ENCODE measurements at regions of chr1 and their contacts with region 1.

Region 1: DNA sequence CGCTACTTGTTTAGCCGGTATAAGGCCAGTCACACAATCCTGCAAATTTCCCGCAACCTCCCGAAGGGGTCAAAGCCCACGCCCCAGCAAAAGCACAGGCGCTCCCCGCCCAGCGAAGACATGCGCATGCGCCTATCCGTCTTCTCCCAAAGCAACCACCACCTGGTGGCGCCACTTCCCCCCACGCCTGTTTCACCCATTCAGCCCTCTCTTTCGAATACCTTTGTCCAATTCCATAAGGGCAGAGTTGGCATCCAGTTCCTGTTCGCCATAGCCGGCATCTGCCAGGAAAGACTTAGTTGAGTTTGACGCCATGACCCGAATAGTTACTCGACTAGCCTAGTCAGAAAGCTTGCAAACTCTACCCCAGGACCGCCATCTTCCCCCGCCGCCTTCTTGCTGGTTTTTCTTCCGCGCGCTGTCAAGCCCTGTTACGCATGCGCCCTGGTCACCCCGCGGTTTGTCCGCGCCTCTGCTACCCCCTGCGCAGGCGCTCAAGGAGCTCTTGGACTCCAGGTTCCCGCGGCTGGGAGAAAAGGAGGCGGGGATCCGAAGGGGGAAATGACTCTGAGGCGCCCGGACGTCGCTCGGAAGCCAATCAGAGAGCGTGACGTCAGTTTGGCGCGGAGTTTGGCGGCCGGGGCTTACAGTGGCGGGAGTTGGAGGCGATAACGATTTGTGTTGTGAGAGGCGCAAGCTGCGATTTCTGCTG is at the starts of genes DTL and INTS7:
- DNase-seq: peak; percentile 98 to 100 (median 100)
- ATAC-seq: peak; percentile 86
- H3K4me3 ChIP-seq: peak within 1 kb of the TSS; percentile 74
- H3K27ac ChIP-seq: peak within 1 kb of the TSS; percentile 96
- H3K4me1 ChIP-seq: peaks cover 4 to 34% of the 10 kb centered on the region in 2 experiments; a peak in 4 of 5 replicates
- H3K27me3 ChIP-seq: no peaks in the 10 kb centered on the region
- CTCF ChIP-seq: peak; percentile 64 to 100 (median 80); a peak in 5 of 6 replicates
- EP300 ChIP-seq: no peak
- POLR2A ChIP-seq: peak; percentile 99
- RAD21 ChIP-seq: no peak; a peak in 1 of 4 replicates
- polyA plus RNA-seq, gene DTL: 38.3 to 66.7 TPM
- polyA plus RNA-seq, gene INTS7: 36.5 to 57.0 TPM

Region 2: GRCh38 chr1:211680752-211681327 is 354.4 kb before region 1 on chr1:
- CTCF ChIA-PET with region 1: interaction called, 22 read pairs
- POLR2A ChIA-PET with region 1: interaction called, 18 read pairs
- in situ Hi-C with region 1: loop called (anchors 25 kb)
- intact Hi-C with region 1: loop called (anchors 1 kb)
- DNase-seq: peak; percentile 78 to 92 (median 84)
- ATAC-seq: peak; percentile 82
- H3K4me3 ChIP-seq: no peak overlapping the region
- H3K27ac ChIP-seq: no peak overlapping the region
- H3K4me1 ChIP-seq: peaks cover 4 to 12% of the 10 kb centered on the region in 2 experiments; a peak in 4 of 5 replicates
- H3K27me3 ChIP-seq: peaks cover 7 to 27% of the 10 kb centered on the region in 2 experiments; a peak in 2 of 5 replicates
- CTCF ChIP-seq: peak; percentile 92 to 97 (median 97)
- EP300 ChIP-seq: 0 out of 2 replicates have a peak, but pooled peaks have one; percentile 15
- POLR2A ChIP-seq: no peak
- RAD21 ChIP-seq: peak; percentile 95 to 97

Region 3: GRCh38 chr1:211741116-211741515 is 294.2 kb before region 1 on chr1:
- CTCF ChIA-PET with region 1: no interaction called
- POLR2A ChIA-PET with region 1: no interaction called
- in situ Hi-C with region 1: no loop called
- intact Hi-C with region 1: loop called (anchors 1 kb)
- DNase-seq: peak in 1 of 4 experiments; percentile 43
- ATAC-seq: peak; percentile 59
- H3K4me3 ChIP-seq: no peak overlapping the region
- H3K27ac ChIP-seq: no peak overlapping the region
- H3K4me1 ChIP-seq: peaks cover 7% of the 10 kb centered on the region in 2 experiments; a peak in 3 of 5 replicates
- H3K27me3 ChIP-seq: no peaks in the 10 kb centered on the region
- CTCF ChIP-seq: peak; percentile 26 to 49 (median 44); a peak in 4 of 6 replicates
- EP300 ChIP-seq: no peak
- POLR2A ChIP-seq: no peak
- RAD21 ChIP-seq: peak in 1 of 2 experiments; percentile 64; a peak in 2 of 4 replicates

Region 4: DNA sequence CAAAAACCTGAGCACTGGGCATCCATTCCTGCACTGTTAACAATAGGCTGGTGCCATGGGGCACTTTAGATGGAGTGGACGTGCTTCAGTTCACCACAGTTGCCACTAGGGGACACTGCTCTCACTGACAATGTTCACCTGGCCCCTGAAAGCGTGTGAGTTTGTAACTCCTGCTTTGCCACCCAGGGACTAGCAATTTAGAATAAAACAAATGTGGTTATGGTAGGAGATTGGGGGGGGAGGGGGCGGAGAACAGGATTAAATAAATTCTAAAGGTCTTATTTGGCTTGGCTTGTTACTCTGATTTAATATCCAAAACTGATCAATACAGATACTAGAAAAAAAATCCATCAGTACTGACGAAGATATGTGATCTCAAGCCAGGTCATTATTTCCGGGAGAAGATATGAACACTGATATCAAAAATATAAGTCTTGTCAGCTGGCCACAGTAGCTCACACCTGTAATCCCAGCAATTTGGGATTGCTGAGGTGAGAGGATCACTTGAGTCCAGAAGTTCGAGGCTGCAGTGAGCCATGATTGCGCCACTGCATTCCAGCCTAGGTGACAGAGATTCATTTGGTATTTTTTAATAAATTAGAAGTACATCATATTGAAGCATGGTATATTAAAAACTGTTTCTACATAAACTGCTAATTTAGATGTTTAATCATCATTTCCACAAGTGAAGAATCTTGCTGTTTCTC is 23.1 kb before region 1 on chr1:
- CTCF ChIA-PET with region 1: interaction called, 12 read pairs
- POLR2A ChIA-PET with region 1: interaction called, 8 read pairs
- in situ Hi-C with region 1: no loop called
- intact Hi-C with region 1: loop called (anchors 1 kb)
- DNase-seq: peak; percentile 77 to 82 (median 78)
- ATAC-seq: peak; percentile 97
- H3K4me3 ChIP-seq: no peak overlapping the region
- H3K27ac ChIP-seq: no peak overlapping the region
- H3K4me1 ChIP-seq: no peaks in the 10 kb centered on the region
- H3K27me3 ChIP-seq: no peaks in the 10 kb centered on the region
- CTCF ChIP-seq: peak; percentile 92 to 98 (median 95)
- EP300 ChIP-seq: 0 out of 2 replicates have a peak, but pooled peaks have one; percentile 16
- POLR2A ChIP-seq: no peak
- RAD21 ChIP-seq: peak; percentile 89 to 95

Region 5: DNA sequence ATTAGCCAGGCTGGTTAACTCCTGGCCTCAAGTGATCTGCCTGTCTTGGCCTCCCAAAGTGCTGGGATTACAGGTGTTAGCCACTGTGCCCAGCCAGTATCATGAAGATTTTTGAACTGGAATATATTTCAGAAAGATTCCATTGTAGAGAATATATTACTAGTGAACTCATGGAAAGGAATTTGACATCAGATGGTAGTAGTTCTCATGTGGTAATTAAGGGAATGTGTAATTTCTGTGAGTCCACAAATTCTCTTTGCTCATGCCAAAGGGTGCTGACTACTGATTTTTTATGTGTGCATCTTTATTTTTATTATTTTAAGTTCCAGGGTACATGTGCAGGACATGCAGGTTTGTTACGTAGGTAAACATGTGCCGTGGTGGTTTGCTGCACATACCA is 10.7 kb after region 1 on chr1:
- CTCF ChIA-PET with region 1: no interaction called
- POLR2A ChIA-PET with region 1: interaction called, 36 read pairs
- in situ Hi-C with region 1: no loop called
- intact Hi-C with region 1: no loop called
- DNase-seq: no peak
- ATAC-seq: no peak
- H3K4me3 ChIP-seq: no peak overlapping the region
- H3K27ac ChIP-seq: no peak overlapping the region
- H3K4me1 ChIP-seq: no peaks in the 10 kb centered on the region
- H3K27me3 ChIP-seq: no peaks in the 10 kb centered on the region
- CTCF ChIP-seq: no peak
- EP300 ChIP-seq: no peak
- POLR2A ChIP-seq: no peak
- RAD21 ChIP-seq: no peak